AG04449 (cell line): ENCODE measurements at regions of chr11 and their contacts with region 1.

Region 1: GRCh38 chr11:62689421-62690183 is at the start of gene LRRN4CL:
- DNase-seq: no peak
- H3K4me3 ChIP-seq: peak within 1 kb of the TSS; percentile 45
- CTCF ChIP-seq: no peak

Region 2: DNA sequence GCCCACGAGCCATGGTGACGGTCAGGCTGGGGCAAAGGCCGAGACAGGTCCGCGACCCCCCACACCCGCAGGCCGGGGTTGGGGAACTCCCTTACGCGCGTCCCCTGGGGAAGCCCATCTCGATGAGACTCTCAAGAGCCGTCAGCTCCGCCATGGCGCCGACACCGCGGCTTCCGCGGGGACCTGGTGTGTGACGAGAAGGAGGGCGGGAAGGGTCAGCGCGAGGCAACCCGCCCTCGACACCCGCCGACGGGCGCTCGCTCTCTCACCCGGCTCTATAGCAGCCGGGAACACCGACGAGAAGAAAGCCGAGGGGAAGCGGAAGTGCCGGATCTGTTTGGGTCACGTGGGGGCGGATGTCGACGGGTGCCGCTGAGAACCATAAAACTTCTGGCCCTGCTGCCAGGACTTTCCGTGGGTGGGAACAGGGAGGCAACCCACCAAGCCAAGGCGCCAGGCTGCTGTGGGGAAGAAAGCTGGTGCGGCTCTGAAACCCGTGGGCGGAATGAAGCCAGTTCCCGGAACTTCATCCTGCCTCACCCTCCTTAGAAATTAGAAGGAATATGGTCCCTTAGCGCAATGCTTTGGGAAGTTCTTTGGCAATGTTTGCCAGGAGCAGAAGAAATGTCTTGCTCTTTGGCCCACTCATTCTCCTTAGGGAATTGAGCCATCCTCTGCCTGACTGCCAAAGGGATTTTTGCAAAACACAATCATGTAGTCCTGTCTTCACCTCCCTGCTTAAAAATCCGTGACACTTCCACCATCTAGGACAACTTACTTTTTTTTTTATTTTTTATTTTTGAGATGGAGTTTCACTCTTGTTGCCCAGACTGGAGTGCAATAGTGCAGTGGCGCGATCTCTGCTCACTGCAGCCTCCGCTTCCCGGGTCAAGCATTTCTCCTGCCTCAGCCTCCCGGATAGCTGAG is 10.6 kb before region 1 on chr11 and contains the start of gene UBXN1:
- CTCF ChIA-PET with region 1: interaction called, 128 read pairs
- POLR2A ChIA-PET with region 1: interaction called, 10 read pairs
- DNase-seq: no peak
- H3K4me3 ChIP-seq: peak within 1 kb of the TSS; percentile 95
- CTCF ChIP-seq: no peak

Region 3: GRCh38 chr11:62705880-62706849 is 16.6 kb after region 1 on chr11:
- CTCF ChIA-PET with region 1: interaction called, 152 read pairs
- POLR2A ChIA-PET with region 1: interaction called, 14 read pairs
- DNase-seq: no peak
- H3K4me3 ChIP-seq: peak overlapping the region; percentile 77
- CTCF ChIP-seq: no peak

Region 4: GRCh38 chr11:62816557-62816956 is 127.0 kb after region 1 on chr11:
- CTCF ChIA-PET with region 1: no interaction called
- POLR2A ChIA-PET with region 1: no interaction called
- DNase-seq: no peak
- H3K4me3 ChIP-seq: no peak overlapping the region
- CTCF ChIP-seq: no peak

Region 5: DNA sequence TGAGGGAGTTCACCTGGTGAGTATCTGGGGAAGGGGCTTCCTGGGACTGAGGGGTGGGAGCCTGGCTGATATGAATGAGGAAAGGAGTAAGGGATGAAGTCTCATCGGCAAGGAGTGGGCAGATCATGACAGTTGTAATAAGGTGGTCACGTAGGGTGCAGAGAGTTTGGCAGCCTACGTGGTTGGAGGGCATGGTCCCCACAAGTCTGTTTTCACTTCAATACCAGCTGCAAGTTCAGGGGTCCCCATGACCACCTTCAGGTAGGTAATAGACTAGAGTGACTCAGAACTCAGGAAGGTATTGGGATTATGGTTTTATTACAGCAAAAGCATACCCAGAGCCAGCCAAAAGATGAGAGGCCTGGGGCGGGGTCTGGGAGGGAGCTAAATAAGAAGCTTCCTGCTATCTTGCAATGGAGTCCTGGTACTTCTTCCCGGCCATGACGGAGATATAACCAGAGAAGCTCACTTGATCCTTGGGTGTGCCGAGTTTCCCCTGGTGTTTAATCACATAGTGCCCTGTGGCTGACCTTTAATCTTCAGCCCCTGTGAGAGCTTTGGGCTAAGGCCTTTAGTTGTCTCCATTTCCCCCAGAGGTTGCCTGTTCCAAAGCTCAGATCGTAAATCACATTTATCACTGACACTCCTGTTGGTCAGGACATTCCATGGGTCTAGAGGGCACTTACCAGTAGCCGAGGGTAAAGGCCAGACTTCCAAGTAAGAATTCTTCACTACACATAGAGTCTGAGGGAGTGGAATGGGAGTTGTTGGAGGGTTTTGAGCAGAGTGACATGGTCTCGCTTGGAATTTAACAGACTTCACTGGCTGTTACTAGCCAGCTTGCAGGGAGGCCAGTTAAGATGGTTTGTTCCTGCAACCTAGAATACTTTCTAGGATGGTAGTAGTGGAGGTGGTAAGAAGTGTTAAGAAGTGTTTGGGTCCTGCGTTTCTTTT is 200.2 kb after region 1 on chr11:
- CTCF ChIA-PET with region 1: no interaction called
- POLR2A ChIA-PET with region 1: no interaction called
- DNase-seq: no peak
- H3K4me3 ChIP-seq: no peak overlapping the region
- CTCF ChIP-seq: no peak